ENCODE measurements at regions of chr11 and their contacts with region 1.

Region 1: GRCh38 chr11:75706260-75706729 is 11.3 kb upstream of the MOGAT2 start:
- DNase-seq: peak; percentile 51
- ATAC-seq: peak; percentile 92
- H3K4me3 Mint-ChIP-seq: no peak overlapping the region
- H3K27ac Mint-ChIP-seq: no peak overlapping the region
- H3K4me1 Mint-ChIP-seq: peaks cover 11% of the 10 kb centered on the region
- H3K27me3 Mint-ChIP-seq: peaks cover 4% of the 10 kb centered on the region
- CTCF ChIP-seq: peak; percentile 33

Region 2: GRCh38 chr11:75445315-75445953 is 260.9 kb before region 1 on chr11:
- CTCF ChIA-PET with region 1: no interaction called
- POLR2A ChIA-PET with region 1: no interaction called
- intact Hi-C with region 1: loop called (anchors 5 kb)
- DNase-seq: peak; percentile 69
- ATAC-seq: peak; percentile 98
- H3K4me3 Mint-ChIP-seq: no peak overlapping the region
- H3K27ac Mint-ChIP-seq: no peak overlapping the region
- H3K4me1 Mint-ChIP-seq: no peaks in the 10 kb centered on the region
- H3K27me3 Mint-ChIP-seq: no peaks in the 10 kb centered on the region
- CTCF ChIP-seq: no peak

Region 3: DNA sequence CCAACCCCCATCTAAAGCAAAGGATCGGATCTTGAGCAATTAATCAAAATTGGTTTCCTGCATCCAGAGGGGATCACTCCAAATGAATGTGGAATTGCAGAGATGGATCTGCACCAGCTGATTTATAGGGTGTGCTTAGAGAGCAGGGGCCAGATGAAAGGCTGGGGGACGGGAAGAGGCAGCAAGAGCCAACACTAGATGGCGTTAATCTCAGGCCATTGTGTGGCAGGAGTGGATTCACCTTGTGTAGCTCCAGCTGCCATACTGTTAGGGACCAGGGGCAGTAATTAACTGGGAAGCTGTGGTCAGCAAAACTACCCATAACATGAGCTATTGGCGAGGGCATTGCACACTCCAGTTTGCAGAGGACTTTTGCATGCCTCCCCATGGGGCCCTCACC is 108.7 kb before region 1 on chr11:
- CTCF ChIA-PET with region 1: interaction called, 5 read pairs
- POLR2A ChIA-PET with region 1: no interaction called
- intact Hi-C with region 1: loop called (anchors 2 kb)
- DNase-seq: no peak
- ATAC-seq: no peak
- H3K4me3 Mint-ChIP-seq: no peak overlapping the region
- H3K27ac Mint-ChIP-seq: no peak overlapping the region
- H3K4me1 Mint-ChIP-seq: peaks cover 20% of the 10 kb centered on the region
- H3K27me3 Mint-ChIP-seq: peaks cover 4% of the 10 kb centered on the region
- CTCF ChIP-seq: no peak

Region 4: GRCh38 chr11:75757651-75758050 is 51.4 kb after region 1 on chr11:
- CTCF ChIA-PET with region 1: no interaction called
- POLR2A ChIA-PET with region 1: no interaction called
- intact Hi-C with region 1: no loop called
- DNase-seq: no peak
- ATAC-seq: no peak
- H3K4me3 Mint-ChIP-seq: no peak overlapping the region
- H3K27ac Mint-ChIP-seq: no peak overlapping the region
- H3K4me1 Mint-ChIP-seq: no peaks in the 10 kb centered on the region
- H3K27me3 Mint-ChIP-seq: peaks cover 4% of the 10 kb centered on the region
- CTCF ChIP-seq: no peak

Region 5: DNA sequence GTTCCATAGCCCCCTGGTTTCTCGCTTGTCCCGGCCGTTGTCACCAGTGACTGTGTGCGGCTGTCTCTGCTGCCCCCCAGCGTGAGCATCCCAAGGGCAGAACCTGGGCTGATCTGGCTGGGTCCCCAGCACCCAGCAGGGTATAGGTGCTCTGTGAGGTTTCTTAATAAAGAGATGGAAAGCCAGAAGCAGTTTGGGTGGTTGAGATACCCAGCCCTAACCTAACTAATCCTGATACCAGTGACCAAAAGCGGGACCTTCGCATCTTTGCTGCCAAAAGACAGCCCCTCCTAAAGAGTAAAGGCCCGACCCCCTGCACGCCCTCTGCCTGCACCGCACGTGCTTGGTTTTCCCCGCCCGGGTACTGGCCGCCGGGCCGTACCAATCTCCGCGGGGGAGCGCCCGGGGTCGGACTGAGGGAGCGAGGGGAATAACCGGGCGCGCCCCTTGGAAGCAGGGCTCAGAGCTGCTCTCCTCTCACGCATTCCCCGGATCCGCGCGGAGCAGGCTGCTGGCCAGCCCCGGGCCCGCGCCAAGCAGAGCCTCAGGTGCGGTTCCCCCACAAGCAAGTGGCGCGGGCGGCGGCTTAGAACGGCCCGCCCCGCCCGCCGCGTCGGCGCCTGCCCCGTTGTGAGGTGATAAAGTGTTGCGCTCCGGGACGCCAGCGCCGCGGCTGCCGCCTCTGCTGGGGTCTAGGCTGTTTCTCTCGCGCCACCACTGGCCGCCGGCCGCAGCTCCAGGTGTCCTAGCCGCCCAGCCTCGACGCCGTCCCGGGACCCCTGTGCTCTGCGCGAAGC is 62.0 kb after region 1 on chr11 and contains the start of gene DGAT2:
- CTCF ChIA-PET with region 1: interaction called, 3 read pairs
- POLR2A ChIA-PET with region 1: interaction called, 3 read pairs
- intact Hi-C with region 1: loop called (anchors 1 kb)
- DNase-seq: peak; percentile 84
- ATAC-seq: peak; percentile 76
- H3K4me3 Mint-ChIP-seq: peak within 1 kb of the TSS; percentile 83
- H3K27ac Mint-ChIP-seq: peak within 1 kb of the TSS; percentile 87
- H3K4me1 Mint-ChIP-seq: peaks cover 56% of the 10 kb centered on the region
- H3K27me3 Mint-ChIP-seq: no peaks in the 10 kb centered on the region
- CTCF ChIP-seq: no peak
- total RNA-seq, gene DGAT2: 6.9 and 7.9 TPM in 2 replicates

Region 6: DNA sequence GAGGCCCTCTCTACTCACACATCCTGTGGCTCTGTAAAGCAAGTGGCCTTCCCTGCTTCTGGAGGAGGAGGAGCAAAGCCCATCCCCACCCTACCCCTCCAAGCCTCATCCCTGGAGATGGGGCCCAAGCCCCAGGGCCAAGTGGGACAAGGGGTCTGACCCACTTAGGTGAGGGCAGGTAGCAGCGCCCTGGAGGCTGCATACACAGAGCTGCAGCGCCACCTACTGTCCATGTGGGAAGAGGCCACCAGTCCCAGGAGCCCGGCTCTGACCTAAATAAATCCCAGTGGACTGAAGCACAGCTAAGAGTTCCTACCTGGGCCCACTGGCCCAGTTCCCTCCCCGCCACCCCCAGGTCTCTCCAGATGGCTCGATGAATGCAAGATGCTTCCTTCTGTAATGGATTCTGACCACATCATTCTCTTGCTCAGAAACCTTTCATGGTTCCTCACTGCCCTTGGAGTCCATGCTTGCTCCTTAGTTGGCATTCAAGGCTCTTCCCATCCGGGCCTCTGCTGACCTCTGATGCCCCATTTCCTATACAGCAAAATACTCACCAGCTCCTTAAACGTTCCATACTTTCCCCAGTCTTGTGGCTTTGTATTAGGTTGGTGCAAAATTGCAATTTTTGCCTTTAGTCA is 612.6 kb after region 1 on chr11:
- CTCF ChIA-PET with region 1: no interaction called
- POLR2A ChIA-PET with region 1: no interaction called
- intact Hi-C with region 1: loop called (anchors 1 kb)
- DNase-seq: peak; percentile 73
- ATAC-seq: peak; percentile 97
- H3K4me3 Mint-ChIP-seq: no peak overlapping the region
- H3K27ac Mint-ChIP-seq: no peak overlapping the region
- H3K4me1 Mint-ChIP-seq: peaks cover 2% of the 10 kb centered on the region
- H3K27me3 Mint-ChIP-seq: peaks cover 40% of the 10 kb centered on the region
- CTCF ChIP-seq: no peak